CD8-positive, alpha-beta T cell (primary cell): ENCODE measurements at regions of chr13 and their contacts with region 1.

Region 1: DNA sequence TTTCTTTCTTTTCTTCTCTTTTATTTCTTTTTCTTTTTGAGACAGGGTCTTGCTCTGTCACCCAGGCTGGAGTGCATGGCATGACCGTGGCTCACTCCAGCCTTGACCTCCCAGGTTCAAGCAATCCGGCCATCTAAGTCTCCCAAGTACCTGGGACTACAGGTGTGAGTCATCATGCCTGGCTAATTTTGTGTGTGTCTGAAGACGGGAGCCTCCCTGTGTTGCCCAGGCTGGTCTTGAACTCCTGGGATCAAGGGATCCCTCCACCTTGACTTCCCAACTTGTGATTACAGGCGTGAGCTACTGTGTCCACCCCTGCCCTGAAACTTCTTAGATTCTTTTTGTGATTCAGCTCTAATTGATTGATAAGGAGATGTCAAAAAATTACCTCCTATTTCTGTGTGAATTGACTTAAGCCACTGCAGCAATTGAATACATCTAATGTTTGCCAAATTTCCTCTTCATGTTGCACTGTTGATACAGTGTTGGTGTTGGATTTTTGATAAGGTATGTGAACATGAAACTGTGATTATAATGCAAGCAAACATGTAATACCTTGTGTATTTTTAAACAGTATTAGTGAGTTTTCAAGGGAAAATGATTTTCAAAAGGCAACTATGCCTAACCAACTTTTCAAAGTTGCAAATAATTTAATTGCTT is 22.6 kb downstream of the KLF5 start:
- DNase-seq: no peak
- ATAC-seq: no peak
- H3K4me3 ChIP-seq: no peak overlapping the region
- H3K4me3 Mint-ChIP-seq: no peak overlapping the region
- H3K27ac ChIP-seq: no peak overlapping the region
- H3K27ac Mint-ChIP-seq: no peak overlapping the region
- H3K4me1 ChIP-seq: no peaks in the 10 kb centered on the region
- H3K4me1 Mint-ChIP-seq: no peaks in the 10 kb centered on the region
- H3K27me3 ChIP-seq: no peaks in the 10 kb centered on the region
- H3K27me3 Mint-ChIP-seq: peaks cover 5% of the 10 kb centered on the region
- CTCF ChIP-seq: no peak

Region 2: DNA sequence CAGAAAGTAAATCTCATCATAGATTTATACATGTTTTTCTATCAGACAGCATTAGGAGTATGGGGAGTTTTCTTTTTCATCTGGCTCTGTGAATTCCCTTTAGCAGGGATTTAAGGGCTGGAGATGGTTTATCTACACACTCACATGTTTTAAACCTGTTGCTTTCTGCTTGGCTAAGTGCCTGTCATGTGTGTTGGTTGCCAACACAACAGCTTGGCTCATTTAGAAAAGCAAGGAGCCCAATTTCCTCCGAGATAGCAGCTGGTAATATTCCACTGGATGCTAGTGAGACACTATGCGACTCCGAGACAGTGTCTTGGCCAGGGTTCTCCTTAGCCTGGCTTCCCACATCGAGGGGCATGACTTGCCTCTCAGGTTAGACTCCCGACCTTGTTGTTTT is 60.7 kb after region 1 on chr13:
- CTCF ChIA-PET with region 1: no interaction called
- POLR2A ChIA-PET with region 1: no interaction called
- intact Hi-C with region 1: loop called in 1 of 2 experiments (anchors 10 kb)
- DNase-seq: no peak
- ATAC-seq: no peak
- H3K4me3 ChIP-seq: no peak overlapping the region
- H3K4me3 Mint-ChIP-seq: no peak overlapping the region
- H3K27ac ChIP-seq: no peak overlapping the region
- H3K27ac Mint-ChIP-seq: no peak overlapping the region
- H3K4me1 ChIP-seq: no peaks in the 10 kb centered on the region
- H3K4me1 Mint-ChIP-seq: no peaks in the 10 kb centered on the region
- H3K27me3 ChIP-seq: no peaks in the 10 kb centered on the region
- H3K27me3 Mint-ChIP-seq: peaks cover 6% of the 10 kb centered on the region
- CTCF ChIP-seq: no peak